PC-9 (cell line): ENCODE measurements at regions of chr16 and their contacts with region 1.

Region 1: GRCh38 chr16:21971856-21972255 is 18.7 kb downstream of the UQCRC2 start:
- DNase-seq: no peak
- H3K4me3 ChIP-seq: no peak overlapping the region
- H3K27ac ChIP-seq: no peak overlapping the region
- H3K4me1 ChIP-seq: no peaks in the 10 kb centered on the region
- H3K27me3 ChIP-seq: no peaks in the 10 kb centered on the region
- CTCF ChIP-seq: no peak

Region 2: GRCh38 chr16:21952793-21953540 is 18.9 kb before region 1 on chr16 and contains the start of gene UQCRC2:
- CTCF ChIA-PET with region 1: interaction called, 10 read pairs
- POLR2A ChIA-PET with region 1: no interaction called
- intact Hi-C with region 1: no loop called
- DNase-seq: peak; percentile 91 to 92
- H3K4me3 ChIP-seq: peak within 1 kb of the TSS; percentile 90
- H3K27ac ChIP-seq: peak within 1 kb of the TSS; percentile 94
- H3K4me1 ChIP-seq: peaks cover 14% of the 10 kb centered on the region
- H3K27me3 ChIP-seq: no peaks in the 10 kb centered on the region
- CTCF ChIP-seq: no peak
- total RNA-seq, gene UQCRC2: 195 and 299 TPM in 2 replicates